ENCODE measurements at regions of chr1 and their contacts with region 1.

Region 1: GRCh38 chr1:32215629-32216480 is 6.3 kb downstream of the TMEM234 start:
- DNase-seq: peak in 8 of 10 donors; percentile 30 to 68 (median 61)
- H3K4me3 ChIP-seq: no peak overlapping the region
- H3K27ac ChIP-seq: peak overlapping the region in 34 of 59 donors; percentile 3 to 78 (median 36)
- H3K27me3 ChIP-seq: no peaks in the 10 kb centered on the region
- CTCF ChIP-seq: peak; percentile 32 to 83 (median 72)

Region 2: DNA sequence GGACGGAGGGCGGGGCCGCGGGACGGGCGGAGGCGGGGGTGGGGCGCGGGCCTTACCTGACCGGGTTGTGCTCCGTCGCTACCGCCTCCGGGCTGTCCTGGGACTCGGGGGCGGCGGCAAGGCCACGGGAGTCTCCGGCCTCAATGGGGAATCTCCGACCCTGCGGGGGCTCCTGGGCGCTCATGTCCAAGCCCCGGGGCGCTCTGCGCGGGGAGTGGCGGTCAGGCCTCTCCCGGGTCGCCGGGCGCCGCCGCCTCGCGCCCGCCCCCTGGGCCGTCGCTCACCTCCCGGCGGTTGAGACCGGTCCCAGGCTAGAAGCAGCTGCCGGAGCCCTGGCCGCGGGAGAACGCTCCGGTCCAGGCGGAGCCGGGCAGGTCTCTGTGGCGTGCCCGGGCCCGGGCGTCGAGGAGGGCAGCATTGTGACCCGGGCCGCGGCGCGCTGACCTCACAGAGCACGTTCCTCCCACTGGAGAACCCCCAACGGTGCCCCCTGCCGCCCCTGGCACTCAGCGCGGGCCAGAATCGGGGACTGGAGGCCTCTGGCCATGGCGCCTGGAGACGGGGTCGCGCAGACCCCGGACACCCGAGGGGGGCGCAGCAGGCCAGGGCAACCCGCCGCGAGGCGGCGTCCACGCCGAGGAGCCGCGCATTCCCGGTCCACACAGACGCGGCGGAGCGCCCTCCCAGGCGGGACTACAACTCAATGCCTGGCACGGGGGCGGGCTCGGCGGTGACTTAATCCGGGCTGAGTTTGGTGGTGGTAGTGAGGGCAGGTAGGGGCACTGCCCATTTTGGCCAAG is 146.0 kb after region 1 on chr1:
- intact Hi-C with region 1: loop called in 1 of 2 experiments (anchors 10 kb)
- DNase-seq: peak; percentile 42 to 82 (median 74)
- H3K4me3 ChIP-seq: peak overlapping the region; percentile 28 to 69 (median 52)
- H3K27ac ChIP-seq: peak overlapping the region; percentile 22 to 91 (median 78)
- H3K27me3 ChIP-seq: no peaks in the 10 kb centered on the region
- CTCF ChIP-seq: peak in 55 of 56 donors; percentile 37 to 95 (median 69)